Endothelial cell of umbilical vein (primary cell): ENCODE measurements at regions of chr17 and their contacts with region 1.

Region 1: GRCh38 chr17:42120770-42121769 is at the start of gene KAT2A:
- DNase-seq: peak; percentile 79
- H3K4me3 ChIP-seq: peak within 1 kb of the TSS in 2 of 3 experiments; percentile 62 to 70
- H3K27ac ChIP-seq: no peak within 1 kb of the TSS
- H3K4me1 ChIP-seq: peaks cover 5% of the 10 kb centered on the region
- H3K27me3 ChIP-seq: no peaks in the 10 kb centered on the region
- CTCF ChIP-seq: no peak
- POLR2A ChIP-seq: peak; percentile 84
- total RNA-seq, gene KAT2A: 31.3 and 33.4 TPM in 2 replicates

Region 2: DNA sequence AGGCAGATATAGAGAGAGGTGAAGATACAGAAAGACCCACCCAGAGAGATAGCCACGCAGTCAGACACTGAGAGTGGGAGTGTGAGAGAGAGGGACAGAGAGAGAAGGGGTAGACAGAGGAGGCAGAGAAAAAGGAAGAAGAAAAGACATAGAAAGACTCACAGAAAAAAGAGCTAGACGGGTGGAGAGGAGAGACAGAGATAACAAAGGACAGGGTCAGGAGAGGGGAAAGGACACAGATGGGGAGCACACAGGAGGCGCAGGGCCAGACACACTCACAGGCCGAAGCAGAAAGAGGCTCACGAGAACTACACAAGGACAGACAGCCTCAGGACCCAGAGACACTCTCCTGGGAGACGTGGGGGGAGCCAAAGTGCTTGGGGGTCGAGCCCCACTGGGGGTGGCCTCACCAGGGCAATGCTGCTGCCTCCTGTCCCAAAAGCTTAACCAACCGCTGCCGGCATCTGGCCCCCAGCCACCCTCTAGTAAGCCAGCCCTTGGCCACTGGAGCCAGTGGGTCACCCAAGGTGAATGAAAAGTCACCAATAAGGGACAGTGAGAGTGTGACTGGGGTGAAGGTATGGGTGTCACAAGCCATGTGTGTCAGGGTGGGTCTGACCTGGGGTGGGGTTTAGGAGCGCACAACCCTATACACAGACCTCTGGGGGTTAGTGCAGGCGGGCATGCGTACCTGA is 26.5 kb before region 1 on chr17:
- CTCF ChIA-PET with region 1: no interaction called
- POLR2A ChIA-PET with region 1: no interaction called
- dilution Hi-C with region 1: no loop called
- intact Hi-C with region 1: no loop called
- DNase-seq: no peak
- H3K4me3 ChIP-seq: no peak overlapping the region
- H3K27ac ChIP-seq: no peak overlapping the region
- H3K4me1 ChIP-seq: peaks cover 3% of the 10 kb centered on the region
- H3K27me3 ChIP-seq: peaks cover 19 to 26% of the 10 kb centered on the region in 2 experiments
- CTCF ChIP-seq: no peak
- POLR2A ChIP-seq: no peak

Region 3: DNA sequence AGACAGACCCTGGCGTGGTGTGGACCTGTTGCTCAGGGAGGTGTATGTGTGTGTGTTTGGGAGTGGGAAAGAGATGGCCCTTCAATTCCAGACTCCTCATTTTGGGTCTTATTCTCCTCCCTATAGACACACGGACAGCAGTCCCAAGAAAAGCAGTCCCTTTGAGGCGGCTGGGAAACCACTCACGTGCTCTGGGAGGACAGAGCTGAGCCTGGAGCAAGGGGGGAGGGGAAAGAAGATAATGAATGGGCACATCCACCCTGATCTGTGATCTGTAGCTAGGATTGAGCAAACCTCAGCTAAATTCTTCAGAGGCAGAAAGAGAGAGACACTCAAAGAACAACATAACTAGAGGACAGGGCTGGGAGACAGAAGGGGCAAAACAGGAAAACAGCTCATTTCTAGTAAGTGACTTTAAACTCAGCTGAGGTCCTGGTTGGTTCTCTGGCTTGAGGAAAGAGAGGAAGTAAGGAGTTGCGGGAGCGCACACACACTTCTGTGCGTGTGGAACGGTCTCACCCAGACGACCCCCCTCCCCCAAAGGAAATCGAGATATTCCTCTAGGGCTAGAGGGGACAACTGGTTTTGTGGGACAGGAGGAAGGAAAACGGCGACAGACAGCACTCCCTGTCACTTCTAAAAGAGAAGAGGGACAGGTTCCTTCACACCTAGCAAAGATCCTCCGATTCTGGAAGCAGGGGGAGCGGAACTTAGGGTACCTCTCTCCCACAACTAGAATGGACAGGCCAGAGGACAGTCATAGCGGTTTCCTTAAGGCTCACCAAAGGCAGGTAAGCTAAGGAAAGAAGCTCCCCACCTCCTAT is 33.1 kb after region 1 on chr17:
- CTCF ChIA-PET with region 1: interaction called, 5 read pairs
- POLR2A ChIA-PET with region 1: no interaction called
- dilution Hi-C with region 1: no loop called
- intact Hi-C with region 1: loop called (anchors 1 kb)
- DNase-seq: peak; percentile 73
- H3K4me3 ChIP-seq: peak overlapping the region; percentile 73 to 100 (median 90)
- H3K27ac ChIP-seq: peak overlapping the region; percentile 75
- H3K4me1 ChIP-seq: peaks cover 13% of the 10 kb centered on the region
- H3K27me3 ChIP-seq: no peaks in the 10 kb centered on the region
- CTCF ChIP-seq: no peak
- POLR2A ChIP-seq: peak; percentile 53

Region 4: DNA sequence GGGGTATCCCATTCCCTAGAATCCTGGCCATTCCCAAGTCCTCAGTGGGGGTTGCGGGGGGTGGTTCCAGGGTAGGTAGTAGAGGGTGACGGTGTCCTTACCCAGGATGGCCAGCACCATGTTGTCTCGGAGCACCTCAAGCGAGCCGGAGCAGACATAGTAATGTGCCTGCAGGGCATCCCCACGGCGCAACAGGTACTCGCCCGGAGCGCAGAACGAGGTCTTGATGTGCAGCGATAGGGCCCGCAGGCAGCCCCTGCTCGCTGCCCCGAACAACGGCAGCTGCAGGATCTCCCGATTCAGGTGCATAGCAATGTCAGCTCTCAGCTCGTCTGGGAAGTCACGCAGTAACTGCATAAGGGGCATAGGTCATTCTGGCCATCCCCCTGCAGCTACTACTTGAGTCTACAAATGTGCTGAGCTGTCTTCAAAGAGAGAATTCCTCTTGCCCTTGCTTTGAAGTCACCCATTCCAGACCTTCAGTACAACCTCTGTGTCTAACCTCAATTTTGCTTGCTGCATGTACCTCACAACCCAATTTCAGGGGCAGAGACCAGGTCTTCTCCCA is 45.2 kb after region 1 on chr17:
- CTCF ChIA-PET with region 1: no interaction called
- POLR2A ChIA-PET with region 1: no interaction called
- dilution Hi-C with region 1: no loop called
- intact Hi-C with region 1: no loop called
- DNase-seq: no peak
- H3K4me3 ChIP-seq: no peak overlapping the region
- H3K27ac ChIP-seq: no peak overlapping the region
- H3K4me1 ChIP-seq: no peaks in the 10 kb centered on the region
- H3K27me3 ChIP-seq: peaks cover 0 to 2% of the 10 kb centered on the region in 2 experiments
- CTCF ChIP-seq: no peak
- POLR2A ChIP-seq: no peak

Region 5: DNA sequence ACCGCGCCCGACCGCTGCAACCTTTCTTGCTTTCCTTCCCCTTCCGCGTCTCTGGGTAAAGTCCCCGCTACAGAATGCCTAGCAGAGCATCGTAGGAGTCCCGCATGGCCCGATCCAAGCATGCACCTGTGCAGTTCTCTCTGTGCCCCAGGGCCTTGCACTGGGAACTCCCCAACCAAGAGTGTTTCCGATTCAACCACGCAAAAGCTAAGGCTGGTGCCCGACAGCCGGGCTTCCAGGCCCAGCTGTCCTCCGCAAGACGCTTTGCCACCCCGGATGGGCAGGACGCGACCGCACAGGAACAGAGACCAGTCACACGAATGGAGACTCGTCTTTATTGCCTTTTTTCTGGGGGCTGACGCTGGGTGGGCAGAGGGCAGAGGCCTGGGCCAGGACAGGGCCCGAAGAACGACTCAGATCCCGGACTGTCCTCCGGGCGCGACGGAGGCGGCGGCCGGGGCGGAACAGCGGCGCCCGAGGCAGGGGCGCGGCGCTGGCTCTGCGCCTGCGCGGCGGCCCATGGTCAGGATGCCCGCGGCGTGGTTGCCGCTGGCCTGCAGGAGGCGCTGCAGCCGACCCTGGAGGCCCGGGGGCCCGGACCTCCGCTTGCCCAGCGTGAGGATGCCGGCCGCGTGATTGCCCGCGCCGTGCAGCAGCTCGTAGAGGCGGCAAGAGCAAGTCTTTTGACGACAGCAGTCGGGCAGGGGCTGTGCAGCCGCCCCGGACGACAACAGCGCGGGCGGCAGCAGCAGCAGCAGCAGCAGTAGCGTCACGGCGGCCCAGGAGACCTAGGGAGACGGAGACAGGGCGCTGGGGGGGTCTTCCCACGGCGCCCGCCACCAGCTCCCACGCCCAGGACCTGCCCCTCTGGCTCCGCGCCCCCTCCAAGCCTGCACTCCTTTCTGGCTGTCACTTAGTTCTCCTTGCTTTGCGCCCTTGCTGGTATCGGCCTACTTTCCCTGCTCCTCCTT is 63.0 kb after region 1 on chr17:
- CTCF ChIA-PET with region 1: interaction called, 52 read pairs
- POLR2A ChIA-PET with region 1: no interaction called
- dilution Hi-C with region 1: no loop called
- intact Hi-C with region 1: loop called (anchors 2 kb)
- DNase-seq: peak; percentile 70
- H3K4me3 ChIP-seq: peak overlapping the region; percentile 35 to 51 (median 45)
- H3K27ac ChIP-seq: peak overlapping the region; percentile 16
- H3K4me1 ChIP-seq: peaks cover 14% of the 10 kb centered on the region
- H3K27me3 ChIP-seq: peaks cover 9 to 13% of the 10 kb centered on the region in 2 experiments
- CTCF ChIP-seq: peak; percentile 86 to 99
- POLR2A ChIP-seq: peak; percentile 38

Region 6: DNA sequence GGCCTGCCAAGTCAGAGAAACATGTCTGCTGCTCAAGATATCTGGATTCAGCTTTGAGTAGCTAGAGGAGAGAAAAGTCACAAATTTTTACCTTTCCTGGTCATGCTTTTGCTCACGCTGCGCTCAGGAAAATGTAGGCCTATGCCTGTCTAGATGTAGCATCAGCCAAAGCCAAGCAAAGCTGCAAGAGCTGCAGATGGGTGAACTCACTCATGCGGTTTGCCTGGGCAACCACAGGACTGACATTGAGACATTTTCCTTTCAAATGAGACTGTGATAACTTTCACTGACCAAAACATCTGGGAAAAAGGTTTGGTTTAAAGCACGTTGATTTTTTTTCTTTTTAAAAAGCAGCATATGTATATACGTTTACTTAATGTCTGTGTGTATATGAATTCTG is 381.0 kb after region 1 on chr17:
- CTCF ChIA-PET with region 1: no interaction called
- POLR2A ChIA-PET with region 1: no interaction called
- dilution Hi-C with region 1: no loop called
- intact Hi-C with region 1: no loop called
- DNase-seq: no peak
- H3K4me3 ChIP-seq: no peak overlapping the region
- H3K27ac ChIP-seq: no peak overlapping the region
- H3K4me1 ChIP-seq: no peaks in the 10 kb centered on the region
- H3K27me3 ChIP-seq: no peaks in the 10 kb centered on the region
- CTCF ChIP-seq: no peak
- POLR2A ChIP-seq: no peak